GM10248 (cell line): ENCODE measurements at regions of chr2 and their contacts with region 1.

Region 1: DNA sequence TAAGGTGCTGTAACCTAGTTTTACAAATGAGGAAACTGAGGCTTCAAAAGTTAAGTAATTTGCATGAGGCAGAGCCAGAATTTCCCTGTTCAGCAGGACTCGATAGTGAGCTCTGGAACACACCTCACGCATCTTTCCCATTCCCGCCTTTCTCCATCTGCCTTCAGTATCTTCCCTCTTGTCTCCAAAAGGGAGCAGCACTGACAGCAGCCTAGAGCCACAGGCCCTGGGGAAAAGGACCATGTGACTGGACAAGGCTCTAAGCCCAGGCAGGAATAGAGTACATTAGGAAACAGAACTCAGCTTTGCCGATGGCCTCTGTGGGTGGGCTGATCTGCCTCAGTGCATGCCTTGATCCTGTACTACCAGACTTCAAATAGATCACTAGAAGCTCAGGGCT is 21.5 kb downstream of the GPR155 start:
- DNase-seq: no peak
- CTCF ChIP-seq: no peak

Region 2: GRCh38 chr2:174492963-174493431 is 27.7 kb after region 1 on chr2:
- CTCF ChIA-PET with region 1: interaction called, 65 read pairs
- POLR2A ChIA-PET with region 1: no interaction called
- DNase-seq: peak; percentile 70
- CTCF ChIP-seq: no peak

Region 3: GRCh38 chr2:174546581-174547506 is 81.5 kb after region 1 on chr2:
- CTCF ChIA-PET with region 1: interaction called, 136 read pairs
- POLR2A ChIA-PET with region 1: no interaction called
- DNase-seq: peak; percentile 52
- CTCF ChIP-seq: peak; percentile 62

Region 4: GRCh38 chr2:174593574-174594203 is 128.4 kb after region 1 on chr2:
- CTCF ChIA-PET with region 1: interaction called, 20 read pairs
- POLR2A ChIA-PET with region 1: no interaction called
- DNase-seq: peak; percentile 50
- CTCF ChIP-seq: no peak

Region 5: DNA sequence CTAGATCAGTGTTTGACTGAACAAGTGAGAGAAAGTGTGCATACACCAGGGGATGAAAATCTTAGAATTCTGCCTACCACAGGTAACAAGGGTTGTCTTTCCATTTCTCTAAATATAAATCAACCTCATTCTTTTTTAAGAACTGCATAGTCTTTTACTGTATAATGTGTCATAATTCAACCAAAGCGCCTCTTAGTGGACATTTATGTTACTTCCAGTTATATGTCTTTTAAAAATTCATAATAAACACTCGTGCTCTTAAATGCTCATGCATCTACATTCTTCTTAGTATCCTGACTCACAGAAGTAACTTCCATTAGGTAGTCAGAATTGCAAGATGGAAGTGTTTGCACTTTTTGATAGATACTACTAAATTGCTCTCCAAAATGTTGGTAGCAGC is 222.8 kb after region 1 on chr2:
- CTCF ChIA-PET with region 1: interaction called, 39 read pairs
- POLR2A ChIA-PET with region 1: no interaction called
- DNase-seq: no peak
- CTCF ChIP-seq: peak; percentile 1